WTC11 (cell line): ENCODE measurements at regions of chr16 and their contacts with region 1.

Region 1: GRCh38 chr16:70380861-70381603 is 34.3 kb downstream of the DDX19A start:
- DNase-seq: peak; percentile 98
- ATAC-seq: peak; percentile 90
- H3K4me3 Mint-ChIP-seq: peak overlapping the region; percentile 92
- H3K27ac Mint-ChIP-seq: peak overlapping the region; percentile 98
- H3K4me1 Mint-ChIP-seq: peaks cover 16% of the 10 kb centered on the region
- H3K27me3 Mint-ChIP-seq: no peaks in the 10 kb centered on the region
- CTCF ChIP-seq: no peak

Region 2: DNA sequence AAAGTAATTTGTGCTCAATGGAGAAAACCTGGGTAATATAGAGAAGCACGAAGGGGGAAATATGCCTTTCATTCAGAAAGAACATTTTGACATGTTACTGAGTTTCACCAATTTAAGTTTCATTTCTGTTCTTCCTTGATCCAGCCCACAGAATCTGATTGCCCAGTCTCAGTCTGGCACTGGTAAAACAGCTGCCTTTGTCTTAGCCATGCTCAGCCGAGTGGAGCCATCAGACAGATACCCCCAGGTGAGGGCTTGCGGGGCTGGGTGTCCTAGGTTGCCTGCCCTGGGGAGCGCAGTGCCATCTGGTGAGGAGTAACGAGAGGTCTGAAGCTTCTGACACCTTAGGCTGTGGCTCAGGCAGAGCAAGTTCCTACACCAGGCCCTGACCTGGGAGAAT is 16.6 kb before region 1 on chr16:
- CTCF ChIA-PET with region 1: interaction called, 21 read pairs
- POLR2A ChIA-PET with region 1: interaction called, 3 read pairs
- DNase-seq: no peak
- ATAC-seq: peak; percentile 41
- H3K4me3 Mint-ChIP-seq: no peak overlapping the region
- H3K27ac Mint-ChIP-seq: no peak overlapping the region
- H3K4me1 Mint-ChIP-seq: no peaks in the 10 kb centered on the region
- H3K27me3 Mint-ChIP-seq: no peaks in the 10 kb centered on the region
- CTCF ChIP-seq: no peak

Region 3: GRCh38 chr16:70454222-70455034 is 73.4 kb after region 1 on chr16 and contains the start of gene FCSK:
- CTCF ChIA-PET with region 1: interaction called, 20 read pairs
- POLR2A ChIA-PET with region 1: interaction called, 17 read pairs
- DNase-seq: peak; percentile 84
- ATAC-seq: peak; percentile 94
- H3K4me3 Mint-ChIP-seq: peak within 1 kb of the TSS; percentile 92
- H3K27ac Mint-ChIP-seq: peak within 1 kb of the TSS; percentile 97
- H3K4me1 Mint-ChIP-seq: peaks cover 10% of the 10 kb centered on the region
- H3K27me3 Mint-ChIP-seq: no peaks in the 10 kb centered on the region
- CTCF ChIP-seq: no peak
- total RNA-seq, gene FCSK: 7.0 to 10.6 TPM (median 8.6 TPM) in 3 replicates

Region 4: GRCh38 chr16:71855937-71856662 is 1475.1 kb after region 1 on chr16:
- CTCF ChIA-PET with region 1: no interaction called
- POLR2A ChIA-PET with region 1: interaction called, 11 read pairs
- DNase-seq: no peak
- ATAC-seq: no peak
- H3K4me3 Mint-ChIP-seq: no peak overlapping the region
- H3K27ac Mint-ChIP-seq: 0 out of 2 replicates have a peak overlapping the region, but pooled peaks have one; percentile 32
- H3K4me1 Mint-ChIP-seq: no peaks in the 10 kb centered on the region
- H3K27me3 Mint-ChIP-seq: no peaks in the 10 kb centered on the region
- CTCF ChIP-seq: no peak